Calu3 (cell line): ENCODE measurements at regions of chr9 and their contacts with region 1.

Region 1: GRCh38 chr9:75866273-75866871 is 24.1 kb upstream of the PCSK5 start:
- DNase-seq: peak; percentile 28
- H3K4me3 Mint-ChIP-seq: no peak overlapping the region
- H3K27ac Mint-ChIP-seq: no peak overlapping the region
- H3K4me1 Mint-ChIP-seq: no peaks in the 10 kb centered on the region
- H3K27me3 Mint-ChIP-seq: no peaks in the 10 kb centered on the region
- CTCF ChIP-seq: peak; percentile 18

Region 2: DNA sequence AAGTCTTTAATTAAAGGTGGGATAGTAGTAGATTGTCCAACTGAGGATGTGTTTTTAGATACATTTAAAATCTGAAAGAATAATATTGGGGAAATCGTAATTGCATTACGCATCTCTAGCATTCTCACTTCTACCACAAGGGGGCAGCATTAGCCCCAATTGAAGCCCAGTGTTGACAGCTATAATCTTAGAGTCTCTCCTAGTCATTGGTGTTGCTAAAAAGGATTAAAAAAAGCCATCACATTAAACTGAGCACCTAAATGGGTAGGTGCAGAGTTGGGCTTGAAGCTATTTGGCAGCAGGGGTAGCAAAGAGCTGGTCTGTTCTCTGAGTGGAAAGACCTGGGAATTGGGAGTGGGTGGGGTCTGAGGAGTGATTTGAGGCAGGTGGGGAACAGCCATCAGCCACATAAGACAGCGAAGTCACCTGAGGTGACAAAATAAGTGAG is 600.8 kb before region 1 on chr9:
- CTCF ChIA-PET with region 1: interaction called, 3 read pairs
- intact Hi-C with region 1: loop called (anchors 5 kb)
- DNase-seq: peak; percentile 48
- H3K4me3 Mint-ChIP-seq: no peak overlapping the region
- H3K27ac Mint-ChIP-seq: no peak overlapping the region
- H3K4me1 Mint-ChIP-seq: no peaks in the 10 kb centered on the region
- H3K27me3 Mint-ChIP-seq: no peaks in the 10 kb centered on the region
- CTCF ChIP-seq: peak; percentile 62

Region 3: DNA sequence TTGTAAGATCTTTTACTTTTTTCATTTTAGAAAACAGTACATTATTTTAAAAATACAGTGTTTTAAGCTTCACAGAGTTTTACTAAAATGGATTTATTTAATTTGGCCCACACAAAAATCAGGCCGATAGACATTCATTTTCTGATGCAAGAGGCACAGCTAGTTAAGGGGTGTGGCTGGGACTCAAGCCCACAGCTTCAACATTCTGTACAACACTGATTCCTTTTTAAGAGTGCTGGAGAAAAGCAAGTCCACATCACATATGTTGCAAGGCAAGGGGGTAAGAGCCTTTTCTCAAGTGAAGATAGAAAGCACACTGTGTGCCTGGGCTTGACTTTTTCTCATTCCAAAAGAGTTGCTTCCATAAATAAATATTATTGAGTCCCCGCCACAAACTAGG is 332.0 kb after region 1 on chr9:
- CTCF ChIA-PET with region 1: no interaction called
- intact Hi-C with region 1: no loop called
- DNase-seq: no peak
- H3K4me3 Mint-ChIP-seq: no peak overlapping the region
- H3K27ac Mint-ChIP-seq: no peak overlapping the region
- H3K4me1 Mint-ChIP-seq: peaks cover 5% of the 10 kb centered on the region
- H3K27me3 Mint-ChIP-seq: no peaks in the 10 kb centered on the region
- CTCF ChIP-seq: no peak

Region 4: DNA sequence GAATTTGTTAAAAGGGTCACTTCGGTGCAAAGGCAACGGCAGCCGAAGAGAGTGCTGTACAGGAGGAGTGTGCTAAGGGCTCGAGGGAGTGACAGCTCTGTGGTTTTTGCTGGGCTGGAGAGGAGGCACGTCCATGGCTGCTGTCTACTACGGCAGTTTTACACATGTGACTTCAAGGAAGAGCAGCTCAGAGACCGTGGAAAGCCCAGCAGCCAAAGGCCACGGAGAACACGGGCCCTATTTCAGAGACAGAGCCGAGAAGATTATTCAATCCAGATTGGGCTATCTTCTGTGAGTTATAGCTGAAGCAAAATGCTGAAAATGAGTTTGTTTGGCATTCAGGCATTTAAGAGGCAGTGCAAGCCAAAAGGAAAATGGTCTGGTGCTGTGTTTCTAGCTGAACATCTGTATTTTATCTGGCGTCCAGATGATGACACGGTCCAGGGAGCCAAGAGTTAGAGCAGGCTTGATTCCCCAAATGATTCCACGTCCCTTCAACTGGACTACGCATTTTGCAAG is 431.4 kb after region 1 on chr9:
- CTCF ChIA-PET with region 1: no interaction called
- intact Hi-C with region 1: loop called (anchors 5 kb)
- DNase-seq: no peak
- H3K4me3 Mint-ChIP-seq: no peak overlapping the region
- H3K27ac Mint-ChIP-seq: no peak overlapping the region
- H3K4me1 Mint-ChIP-seq: no peaks in the 10 kb centered on the region
- H3K27me3 Mint-ChIP-seq: no peaks in the 10 kb centered on the region
- CTCF ChIP-seq: no peak